ENCODE measurements at regions of chr17 and their contacts with region 1.

Region 1: GRCh38 chr17:64459284-64459747 is 10.4 kb downstream of the MILR1 start:
- DNase-seq: no peak
- H3K4me3 Mint-ChIP-seq: no peak overlapping the region
- H3K27ac Mint-ChIP-seq: no peak overlapping the region
- H3K4me1 Mint-ChIP-seq: peaks cover 11% of the 10 kb centered on the region
- H3K27me3 Mint-ChIP-seq: no peaks in the 10 kb centered on the region

Region 2: GRCh38 chr17:64491034-64491859 is 31.9 kb after region 1 on chr17:
- intact Hi-C with region 1: loop called (anchors 5 kb)
- DNase-seq: peak; percentile 47
- H3K4me3 Mint-ChIP-seq: no peak overlapping the region
- H3K27ac Mint-ChIP-seq: no peak overlapping the region
- H3K4me1 Mint-ChIP-seq: peaks cover 20% of the 10 kb centered on the region
- H3K27me3 Mint-ChIP-seq: no peaks in the 10 kb centered on the region

Measured in activated T-helper 2 cell treated with anti-CD3 and anti-CD28 coated beads, Interferon-gamma antibody, Interleukin-2, Interleukin-4, amounts not matched to agents 10 μg/mL and 5 μg/mL and 100 μg/mL, durations not matched to agents 14 hours and 24 hours and 36 hours (primary cell).